AG04450 (cell line): ENCODE measurements at regions of chr17 and their contacts with region 1.

Region 1: DNA sequence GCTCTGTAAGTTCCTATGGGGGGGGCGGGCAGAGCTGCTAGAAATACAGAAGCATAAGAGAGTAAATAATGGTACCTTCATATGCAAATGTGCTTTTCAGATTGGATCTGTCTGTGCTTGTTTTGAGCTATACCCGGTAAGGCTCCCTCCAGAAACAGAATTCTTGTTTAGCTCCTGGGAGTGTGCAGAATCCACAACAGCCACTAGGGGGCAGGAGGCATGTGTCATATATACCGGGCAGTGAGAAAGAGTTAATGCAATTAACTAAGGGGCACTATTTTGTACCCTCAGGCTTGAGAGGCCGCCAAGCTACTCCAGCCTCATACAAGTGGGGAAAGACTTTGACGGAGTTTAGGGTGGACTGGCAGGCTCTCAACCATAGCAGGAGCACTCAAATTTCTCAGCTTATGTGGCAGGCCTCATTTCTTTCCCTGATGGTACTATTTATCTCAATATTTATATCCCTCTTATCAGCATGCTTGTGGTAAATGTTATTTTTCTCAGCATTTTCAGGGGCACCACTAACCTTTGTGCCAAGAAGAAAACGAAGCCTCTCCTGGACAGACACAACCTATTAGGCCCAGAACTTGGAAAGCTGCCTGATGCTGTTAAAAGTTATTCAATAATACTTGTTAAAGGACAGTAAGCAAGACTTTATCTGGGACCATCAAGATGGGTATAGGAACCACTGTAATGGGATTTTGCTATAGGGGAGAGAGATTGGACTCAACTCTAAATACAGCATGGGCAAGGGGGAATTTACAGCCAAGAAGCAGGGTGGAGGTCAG is 10.7 kb upstream of the CENPV start:
- DNase-seq: no peak
- H3K4me3 ChIP-seq: no peak overlapping the region
- H3K27ac ChIP-seq: no peak overlapping the region
- H3K27me3 ChIP-seq: no peaks in the 10 kb centered on the region
- CTCF ChIP-seq: peak; percentile 97

Region 2: DNA sequence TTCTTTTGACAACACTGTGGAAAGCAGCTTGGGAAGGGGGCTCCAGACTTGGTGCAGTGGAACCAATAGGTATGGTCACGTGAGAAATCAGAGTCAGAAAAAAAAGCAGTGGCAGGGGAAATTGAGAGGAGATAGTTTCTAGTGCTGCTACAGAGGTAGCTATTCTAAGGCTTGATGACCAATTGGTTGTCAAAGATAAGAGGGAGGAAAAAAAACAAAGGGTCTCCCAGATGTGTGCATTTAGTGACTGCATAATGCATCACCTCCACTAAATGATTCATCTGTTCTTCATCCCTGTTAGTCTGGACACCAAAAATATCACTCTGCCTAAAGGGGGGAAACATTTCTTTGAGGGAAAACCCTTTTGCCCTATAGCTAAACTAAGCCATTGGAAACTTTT is 90.4 kb before region 1 on chr17:
- CTCF ChIA-PET with region 1: no interaction called
- POLR2A ChIA-PET with region 1: no interaction called
- DNase-seq: no peak
- H3K4me3 ChIP-seq: no peak overlapping the region
- H3K27ac ChIP-seq: no peak overlapping the region
- H3K27me3 ChIP-seq: no peaks in the 10 kb centered on the region
- CTCF ChIP-seq: no peak

Region 3: GRCh38 chr17:16342979-16343378 is 21.0 kb before region 1 on chr17:
- CTCF ChIA-PET with region 1: interaction called, 10 read pairs
- POLR2A ChIA-PET with region 1: no interaction called
- DNase-seq: peak; percentile 29
- H3K4me3 ChIP-seq: no peak overlapping the region
- H3K27ac ChIP-seq: no peak overlapping the region
- H3K27me3 ChIP-seq: no peaks in the 10 kb centered on the region
- CTCF ChIP-seq: no peak

Region 4: GRCh38 chr17:16353317-16354174 is 10.4 kb before region 1 on chr17 and contains the start of gene CENPV:
- CTCF ChIA-PET with region 1: interaction called, 73 read pairs
- POLR2A ChIA-PET with region 1: no interaction called
- DNase-seq: no peak
- H3K4me3 ChIP-seq: peak within 1 kb of the TSS; percentile 74
- H3K27ac ChIP-seq: peak within 1 kb of the TSS; percentile 80
- H3K27me3 ChIP-seq: no peaks in the 10 kb centered on the region
- CTCF ChIP-seq: peak; percentile 7; the same call in 1 of the 2 replicates
- polyA plus RNA-seq, gene CENPV: 65.2 and 71.9 TPM in 2 replicates

Region 5: GRCh38 chr17:16438557-16439302 is 74.8 kb after region 1 on chr17:
- CTCF ChIA-PET with region 1: interaction called, 16 read pairs
- POLR2A ChIA-PET with region 1: interaction called, 9 read pairs
- DNase-seq: peak; percentile 100
- H3K4me3 ChIP-seq: peak overlapping the region; percentile 99
- H3K27ac ChIP-seq: peak overlapping the region; percentile 86
- H3K27me3 ChIP-seq: no peaks in the 10 kb centered on the region
- CTCF ChIP-seq: no peak

Region 6: GRCh38 chr17:16453493-16453851 is 89.5 kb after region 1 on chr17:
- CTCF ChIA-PET with region 1: interaction called, 20 read pairs
- POLR2A ChIA-PET with region 1: interaction called, 3 read pairs
- DNase-seq: no peak
- H3K4me3 ChIP-seq: no peak overlapping the region
- H3K27ac ChIP-seq: peak overlapping the region; percentile 31
- H3K27me3 ChIP-seq: no peaks in the 10 kb centered on the region
- CTCF ChIP-seq: no peak

Region 7: GRCh38 chr17:16521070-16521727 is 157.3 kb after region 1 on chr17:
- CTCF ChIA-PET with region 1: interaction called, 53 read pairs
- POLR2A ChIA-PET with region 1: no interaction called
- DNase-seq: peak; percentile 81
- H3K4me3 ChIP-seq: no peak overlapping the region
- H3K27ac ChIP-seq: no peak overlapping the region
- H3K27me3 ChIP-seq: no peaks in the 10 kb centered on the region
- CTCF ChIP-seq: peak; percentile 94

Region 8: DNA sequence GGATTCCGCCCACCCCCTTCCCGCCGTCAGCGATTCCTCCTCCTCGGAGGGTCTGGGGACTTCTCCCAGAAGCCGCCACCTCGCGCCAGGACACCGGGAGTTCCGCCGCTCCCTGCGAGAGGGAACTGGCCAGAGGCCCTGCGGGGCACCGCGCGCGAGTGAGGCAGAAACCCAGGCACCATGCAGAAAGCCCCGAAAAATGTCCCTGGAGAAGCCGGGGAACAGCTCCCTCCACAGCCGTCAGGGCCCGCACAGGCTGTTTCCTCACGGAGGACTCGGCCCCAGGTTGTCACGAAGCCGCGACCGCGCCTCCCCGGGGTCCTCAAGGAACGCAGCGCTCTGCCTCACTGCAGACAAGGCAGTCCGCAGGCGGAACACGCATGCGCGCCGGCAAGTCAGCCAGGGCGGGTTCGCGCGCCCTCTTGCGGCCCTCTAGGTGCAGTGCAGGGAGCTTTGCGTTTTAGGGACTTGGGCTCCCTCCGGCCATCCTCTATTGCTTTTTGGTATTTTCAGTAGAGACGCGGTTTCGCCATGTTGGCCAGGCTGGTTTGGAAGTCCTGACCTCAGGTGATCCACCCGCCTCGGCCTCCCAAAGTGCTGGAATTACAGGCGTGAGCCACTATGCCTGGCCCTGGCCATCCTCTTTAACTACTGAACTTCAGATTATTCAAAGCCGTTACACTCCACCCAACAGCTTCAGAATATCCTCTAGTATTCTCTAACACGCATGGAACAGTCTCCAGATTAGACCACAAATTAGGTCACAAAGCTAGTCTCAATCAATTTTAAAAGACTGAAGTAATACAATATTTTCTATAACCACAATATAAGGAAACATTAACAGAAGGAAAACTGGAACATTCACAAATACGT is 225.4 kb after region 1 on chr17:
- CTCF ChIA-PET with region 1: interaction called, 14 read pairs
- POLR2A ChIA-PET with region 1: no interaction called
- DNase-seq: peak; percentile 67
- H3K4me3 ChIP-seq: peak overlapping the region; percentile 71
- H3K27ac ChIP-seq: no peak overlapping the region
- H3K27me3 ChIP-seq: peaks cover 5% of the 10 kb centered on the region
- CTCF ChIP-seq: peak; percentile 97